Sigmoid colon (tissue), 7 donors: ENCODE measurements at regions of chr5 and their contacts with region 1.

Region 1: GRCh38 chr5:98905857-98906690 is 22.7 kb downstream of the CHD1 start:
- DNase-seq: no peak
- H3K4me3 ChIP-seq: no peak overlapping the region
- H3K27ac ChIP-seq: no peak overlapping the region
- H3K4me1 ChIP-seq: peaks cover 0 to 34% (median 8%) of the 10 kb centered on the region in 4 donors
- H3K27me3 ChIP-seq: no peaks in the 10 kb centered on the region
- CTCF ChIP-seq: peak; percentile 61 to 76 (median 66)
- EP300 ChIP-seq: no peak
- POLR2A ChIP-seq: no peak

Region 2: GRCh38 chr5:98839469-98840383 is 66.3 kb before region 1 on chr5:
- intact Hi-C with region 1: no loop called
- DNase-seq: no peak
- H3K4me3 ChIP-seq: peak overlapping the region in 3 of 4 donors; percentile 11 to 27 (median 21)
- H3K27ac ChIP-seq: no peak overlapping the region
- H3K4me1 ChIP-seq: no peaks in the 10 kb centered on the region
- H3K27me3 ChIP-seq: no peaks in the 10 kb centered on the region
- CTCF ChIP-seq: peak in 1 of 4 experiments; percentile 14
- EP300 ChIP-seq: no peak
- POLR2A ChIP-seq: no peak

Region 3: DNA sequence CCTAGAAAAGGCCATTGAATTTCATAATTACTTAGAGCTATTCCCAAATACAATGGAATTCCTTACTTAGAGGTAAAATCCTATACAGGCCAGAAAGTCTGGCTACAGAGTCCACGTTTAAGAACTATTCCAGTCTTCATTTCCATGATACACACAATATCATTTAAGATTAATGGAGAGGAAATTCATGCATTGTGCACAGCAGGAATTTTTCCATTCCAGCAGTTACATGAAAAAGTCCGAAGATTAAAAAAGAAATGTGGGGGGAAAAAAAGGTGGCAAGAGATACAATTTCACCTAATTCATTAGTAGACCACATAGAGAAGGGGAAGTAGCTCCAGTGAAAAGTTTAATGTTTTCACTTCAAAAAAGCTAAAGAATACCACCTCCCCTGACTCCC is 40.4 kb before region 1 on chr5:
- intact Hi-C with region 1: loop called (anchors 5 kb)
- DNase-seq: no peak
- H3K4me3 ChIP-seq: no peak overlapping the region
- H3K27ac ChIP-seq: no peak overlapping the region
- H3K4me1 ChIP-seq: no peaks in the 10 kb centered on the region
- H3K27me3 ChIP-seq: no peaks in the 10 kb centered on the region
- CTCF ChIP-seq: no peak
- EP300 ChIP-seq: no peak
- POLR2A ChIP-seq: no peak

Region 4: DNA sequence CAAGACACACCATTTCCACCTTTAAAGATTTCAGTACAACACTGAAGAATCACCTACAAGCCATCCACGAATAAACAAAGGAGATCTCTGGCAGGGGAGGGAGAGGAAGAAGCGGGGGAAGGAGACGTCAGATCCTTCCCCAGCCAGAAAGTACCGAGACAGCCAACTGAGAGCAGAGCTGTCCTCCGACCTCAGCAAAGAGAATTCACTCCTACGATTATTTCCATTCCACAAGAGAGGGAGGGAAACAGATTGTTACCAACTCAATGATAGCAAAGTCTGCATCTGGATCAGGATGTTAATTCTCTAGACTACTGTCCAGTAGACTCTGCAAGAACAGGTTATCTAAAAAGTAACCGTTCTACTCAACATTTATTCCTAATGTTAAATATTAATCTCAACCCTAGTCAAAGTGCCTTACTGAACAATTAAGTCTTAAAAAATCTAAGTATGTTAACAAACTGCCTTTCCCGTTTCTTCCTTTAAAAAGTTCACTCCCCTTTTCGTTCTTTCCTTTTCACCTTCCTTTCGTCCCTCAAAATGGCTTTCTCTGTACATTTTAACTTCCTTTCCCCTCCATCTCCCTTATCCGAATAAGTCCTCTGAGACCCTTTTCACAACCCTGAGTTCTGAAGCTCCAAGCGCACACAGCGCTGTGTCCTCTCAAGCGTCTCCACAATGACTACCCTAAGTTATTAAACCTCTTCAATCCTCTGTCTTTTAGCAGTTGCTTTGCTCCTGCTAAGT is 21.3 kb after region 1 on chr5:
- intact Hi-C with region 1: no loop called
- DNase-seq: peak; percentile 83
- H3K4me3 ChIP-seq: peak overlapping the region; percentile 78 to 86 (median 84)
- H3K27ac ChIP-seq: peak overlapping the region; percentile 99 to 100 (median 100)
- H3K4me1 ChIP-seq: peaks cover 0 to 44% (median 26%) of the 10 kb centered on the region in 4 donors
- H3K27me3 ChIP-seq: no peaks in the 10 kb centered on the region
- CTCF ChIP-seq: no peak
- EP300 ChIP-seq: no peak
- POLR2A ChIP-seq: peak; percentile 34 to 78

Region 5: DNA sequence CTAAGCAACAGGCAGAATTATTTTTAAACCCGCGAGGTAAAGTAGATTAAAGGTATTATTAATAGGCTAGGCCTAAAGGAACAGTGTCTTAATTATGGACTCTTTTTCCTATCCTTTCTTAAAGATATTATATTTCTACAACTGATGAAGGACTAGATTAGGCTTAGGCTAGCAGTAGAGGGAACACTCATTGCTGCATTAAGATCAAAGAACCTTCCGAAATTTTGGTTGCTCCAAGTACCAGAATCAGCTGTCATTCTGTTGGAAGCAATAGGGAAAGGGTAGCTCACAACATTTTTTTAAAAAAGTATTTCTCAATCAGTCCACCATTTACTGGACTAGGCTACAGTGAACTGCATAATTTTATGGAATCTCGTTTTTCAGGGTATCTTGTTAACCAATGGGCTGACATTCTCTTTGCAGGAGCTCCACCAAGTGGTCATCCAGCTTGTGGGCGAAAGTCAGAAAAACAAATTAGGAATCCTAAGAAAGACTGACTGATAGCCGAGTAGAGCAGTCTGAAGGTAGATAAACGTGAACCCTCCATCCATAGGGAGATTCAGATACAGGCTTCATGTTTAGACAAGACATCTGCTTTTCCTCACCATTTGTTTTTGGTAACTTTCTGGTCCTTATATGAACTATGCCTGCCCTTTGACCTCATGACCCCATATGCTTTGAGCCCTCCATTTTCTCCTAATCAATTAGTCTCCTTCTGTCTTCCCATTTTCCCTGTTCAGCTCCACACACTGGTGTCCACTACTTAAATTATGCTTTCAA is 126.3 kb after region 1 on chr5:
- intact Hi-C with region 1: loop called (anchors 2 kb)
- DNase-seq: no peak
- H3K4me3 ChIP-seq: peak overlapping the region in 2 of 4 donors; percentile 23 to 34
- H3K27ac ChIP-seq: peak overlapping the region; percentile 44 to 54 (median 45)
- H3K4me1 ChIP-seq: peaks cover 0 to 5% (median 2%) of the 10 kb centered on the region in 4 donors
- H3K27me3 ChIP-seq: no peaks in the 10 kb centered on the region
- CTCF ChIP-seq: peak; percentile 44 to 79 (median 59)
- EP300 ChIP-seq: no peak
- POLR2A ChIP-seq: no peak

Region 6: DNA sequence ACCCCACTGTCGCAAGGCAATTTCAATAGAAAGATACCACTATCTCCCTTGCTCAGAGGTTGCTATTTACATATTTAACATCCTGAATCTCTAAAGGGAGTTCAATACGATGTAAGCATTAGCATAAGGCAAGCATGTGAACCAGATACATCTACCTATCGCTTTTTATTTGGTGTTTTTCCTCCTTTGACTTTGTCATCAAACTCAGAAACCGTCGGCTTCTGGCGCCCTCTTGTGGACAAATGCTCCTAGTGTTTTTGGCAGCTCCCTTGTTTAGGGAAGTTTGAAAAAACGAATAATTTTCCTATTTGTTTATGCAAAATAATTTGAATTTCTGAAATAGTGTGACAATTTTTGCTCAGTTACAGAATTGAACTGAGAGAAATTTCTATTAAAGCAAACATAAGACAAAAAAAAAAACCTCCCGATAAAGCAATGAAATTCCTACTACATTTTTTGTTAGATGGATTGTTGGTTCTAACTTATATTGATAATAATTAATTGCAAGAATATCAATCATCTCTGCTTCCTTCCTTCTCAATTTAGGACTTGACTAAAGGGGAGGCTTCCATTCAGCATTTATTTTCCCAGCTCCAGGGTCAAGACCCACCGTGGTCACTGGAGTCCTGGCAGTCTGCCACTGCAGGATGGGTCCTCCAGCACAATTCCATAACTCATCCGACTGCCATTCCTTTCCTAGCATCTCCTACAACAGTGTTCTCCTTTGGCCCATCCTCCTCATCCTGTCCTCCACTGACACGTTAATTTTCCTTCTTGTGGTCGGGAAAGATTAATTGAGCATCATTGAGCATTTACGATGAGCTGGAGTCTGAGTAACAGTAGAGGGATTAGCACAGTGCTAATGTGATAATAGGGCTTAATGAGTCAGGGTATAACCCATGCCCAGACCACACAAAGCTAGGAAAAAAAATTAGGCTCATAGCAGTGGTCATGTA is 154.5 kb after region 1 on chr5:
- intact Hi-C with region 1: loop called (anchors 1 kb)
- DNase-seq: peak; percentile 77
- H3K4me3 ChIP-seq: no peak overlapping the region
- H3K27ac ChIP-seq: no peak overlapping the region
- H3K4me1 ChIP-seq: peaks cover 0 to 8% (median 3%) of the 10 kb centered on the region in 4 donors
- H3K27me3 ChIP-seq: no peaks in the 10 kb centered on the region
- CTCF ChIP-seq: peak; percentile 27 to 91 (median 70)
- EP300 ChIP-seq: no peak
- POLR2A ChIP-seq: no peak